ENCODE measurements at regions of chr15 and their contacts with region 1.

Region 1: DNA sequence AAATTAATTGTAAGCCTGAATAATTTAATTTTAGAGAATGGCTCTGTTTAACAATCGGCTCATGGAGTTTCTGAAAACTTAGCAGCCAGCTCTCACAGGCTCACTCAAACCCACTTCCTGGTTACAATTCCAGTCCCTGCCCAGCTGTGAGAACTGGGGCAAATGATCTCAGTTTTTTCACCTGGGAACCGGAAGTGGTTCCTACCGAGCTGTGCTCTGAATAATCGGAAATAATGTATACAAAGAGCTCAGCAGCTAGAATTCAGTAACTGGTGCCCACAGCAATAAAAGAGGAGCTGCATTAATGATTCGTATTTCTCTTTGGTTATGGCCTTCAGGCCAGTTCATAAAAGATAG is 244.3 kb upstream of the MCTP2 start:
- DNase-seq: no peak
- ATAC-seq: no peak
- H3K4me3 ChIP-seq: no peak overlapping the region
- H3K27ac ChIP-seq: peak overlapping the region in 1 of 12 donors; percentile 20
- H3K4me1 ChIP-seq: peaks cover 0 to 25% (median 3%) of the 10 kb centered on the region in 12 donors
- H3K27me3 ChIP-seq: no peaks in the 10 kb centered on the region
- CTCF ChIP-seq: no peak
- POLR2A ChIP-seq: no peak

Region 2: DNA sequence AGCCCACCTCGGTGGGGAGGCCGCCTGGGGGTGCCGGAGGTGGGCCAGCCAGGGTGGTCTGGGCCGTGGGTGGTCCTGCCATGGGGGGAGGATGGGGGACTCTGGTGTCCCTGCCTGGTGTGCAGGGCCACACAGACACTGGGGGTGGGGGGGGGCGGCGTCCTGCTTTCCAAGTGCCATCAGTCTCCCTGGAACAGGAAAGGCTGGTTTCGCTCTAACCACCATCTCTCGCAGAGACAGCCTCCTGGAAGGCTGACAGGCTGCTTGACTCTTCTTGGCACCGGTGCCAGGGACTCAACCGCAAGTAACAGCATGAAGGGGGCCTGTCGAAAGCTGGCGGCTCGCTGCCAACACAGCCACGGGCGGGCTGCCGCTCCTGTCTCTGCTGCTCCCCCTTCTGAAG is 938.3 kb before region 1 on chr15:
- intact Hi-C with region 1: loop called in 1 of 10 experiments (anchors 10 kb)
- DNase-seq: no peak
- ATAC-seq: no peak
- H3K4me3 ChIP-seq: no peak overlapping the region
- H3K27ac ChIP-seq: peak overlapping the region in 1 of 12 donors; percentile 36
- H3K4me1 ChIP-seq: peaks cover 0 to 8% (median 0%) of the 10 kb centered on the region in 12 donors
- H3K27me3 ChIP-seq: no peaks in the 10 kb centered on the region
- CTCF ChIP-seq: no peak
- POLR2A ChIP-seq: no peak

Measured in heart left ventricle (tissue), 16 donors.